ENCODE measurements at regions of chr3 and their contacts with region 1.

Region 1: GRCh38 chr3:122415720-122416654 is at the start of gene WDR5B:
- DNase-seq: peak; percentile 98
- H3K4me3 Mint-ChIP-seq: peak within 1 kb of the TSS; percentile 99
- H3K27ac Mint-ChIP-seq: peak within 1 kb of the TSS; percentile 99
- H3K4me1 Mint-ChIP-seq: peaks cover 32% of the 10 kb centered on the region
- H3K27me3 Mint-ChIP-seq: no peaks in the 10 kb centered on the region
- CTCF ChIP-seq: no peak
- total RNA-seq, gene WDR5B: 10.0 and 11.0 TPM in 2 replicates

Region 2: GRCh38 chr3:122314228-122314876 is 101.6 kb before region 1 on chr3:
- CTCF ChIA-PET with region 1: no interaction called
- POLR2A ChIA-PET with region 1: interaction called, 20 read pairs
- intact Hi-C with region 1: no loop called
- DNase-seq: peak; percentile 61
- H3K4me3 Mint-ChIP-seq: no peak overlapping the region
- H3K27ac Mint-ChIP-seq: peak overlapping the region; percentile 78
- H3K4me1 Mint-ChIP-seq: peaks cover 19% of the 10 kb centered on the region
- H3K27me3 Mint-ChIP-seq: no peaks in the 10 kb centered on the region
- CTCF ChIP-seq: no peak

Region 3: DNA sequence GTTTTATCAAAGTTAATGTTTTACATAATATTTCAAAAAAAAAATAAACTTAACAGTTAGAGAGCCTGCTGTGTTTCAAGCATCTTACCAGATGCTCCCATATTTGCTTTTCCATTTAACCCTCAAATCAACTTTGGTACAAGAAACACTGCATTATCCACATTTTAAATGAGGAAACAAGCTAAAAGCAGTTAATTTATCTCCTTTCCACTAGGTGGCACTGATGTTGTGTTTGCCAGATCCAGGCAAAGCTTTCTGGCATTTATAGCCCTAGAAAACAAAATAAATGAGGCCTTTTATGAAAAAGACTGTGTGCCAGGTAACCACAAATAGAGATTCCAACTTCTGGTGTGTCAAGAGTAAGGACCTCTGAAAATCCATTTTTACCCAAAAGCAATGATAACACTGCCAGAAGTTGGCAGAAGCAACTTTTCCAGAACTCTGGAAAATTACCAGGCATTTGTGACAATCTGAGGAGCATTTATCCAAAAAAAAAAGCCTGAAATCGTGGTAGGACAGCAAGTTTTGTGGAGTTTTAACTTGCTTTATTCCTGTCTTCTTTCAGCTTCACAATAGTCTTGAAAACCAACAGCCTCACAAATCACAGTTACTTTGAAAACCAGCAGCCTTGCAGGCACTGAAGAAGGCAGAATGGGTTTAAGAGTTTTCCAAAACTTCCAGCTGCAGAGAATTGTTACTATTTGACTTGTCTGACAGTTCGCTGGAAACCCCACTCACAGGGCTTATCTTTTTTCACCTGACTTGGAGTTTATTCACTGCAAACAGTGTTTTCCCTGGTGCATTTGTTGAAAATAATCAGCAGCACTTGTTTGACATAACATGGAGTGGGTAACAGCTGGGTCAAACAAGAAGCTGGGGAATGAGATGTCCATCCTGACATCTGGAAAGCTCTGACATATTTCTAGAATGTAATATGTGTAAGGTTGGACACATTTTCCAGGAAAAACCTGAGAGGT is 22.8 kb before region 1 on chr3:
- CTCF ChIA-PET with region 1: interaction called, 20 read pairs
- POLR2A ChIA-PET with region 1: interaction called, 68 read pairs
- intact Hi-C with region 1: no loop called
- DNase-seq: peak; percentile 56
- H3K4me3 Mint-ChIP-seq: no peak overlapping the region
- H3K27ac Mint-ChIP-seq: peak overlapping the region; percentile 89
- H3K4me1 Mint-ChIP-seq: peaks cover 25% of the 10 kb centered on the region
- H3K27me3 Mint-ChIP-seq: no peaks in the 10 kb centered on the region
- CTCF ChIP-seq: peak; percentile 67

Region 4: DNA sequence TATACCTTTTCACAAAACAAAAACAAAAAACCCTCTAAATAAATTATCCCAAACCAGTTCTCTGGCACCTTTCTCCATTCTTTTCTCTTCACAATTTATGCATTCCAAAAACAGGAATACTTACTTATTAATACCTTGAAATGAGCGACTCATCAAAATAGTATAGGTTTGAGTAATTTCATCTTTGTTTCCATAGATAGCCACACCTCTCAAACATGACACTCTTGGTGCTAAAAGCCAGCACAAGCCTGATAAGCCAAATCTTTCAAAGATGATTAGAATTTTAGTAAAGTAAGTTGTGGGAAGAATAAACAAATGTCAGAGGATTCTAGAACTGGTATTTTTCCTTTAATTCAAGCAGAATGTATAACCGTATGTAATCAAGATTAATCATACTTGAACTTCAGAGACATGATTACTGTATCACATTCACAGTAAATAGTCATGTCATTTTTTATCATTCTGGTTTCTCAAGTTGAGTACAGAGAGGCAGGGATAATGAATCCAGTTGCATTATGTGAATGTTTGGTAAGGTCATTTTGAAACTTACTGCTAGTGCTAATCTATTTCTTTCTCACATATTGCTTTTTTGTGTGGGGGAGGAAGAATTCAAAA is 12.0 kb after region 1 on chr3:
- CTCF ChIA-PET with region 1: interaction called, 8 read pairs
- POLR2A ChIA-PET with region 1: interaction called, 30 read pairs
- intact Hi-C with region 1: no loop called
- DNase-seq: no peak
- H3K4me3 Mint-ChIP-seq: no peak overlapping the region
- H3K27ac Mint-ChIP-seq: peak overlapping the region; percentile 19
- H3K4me1 Mint-ChIP-seq: peaks cover 8% of the 10 kb centered on the region
- H3K27me3 Mint-ChIP-seq: no peaks in the 10 kb centered on the region
- CTCF ChIP-seq: no peak

Region 5: DNA sequence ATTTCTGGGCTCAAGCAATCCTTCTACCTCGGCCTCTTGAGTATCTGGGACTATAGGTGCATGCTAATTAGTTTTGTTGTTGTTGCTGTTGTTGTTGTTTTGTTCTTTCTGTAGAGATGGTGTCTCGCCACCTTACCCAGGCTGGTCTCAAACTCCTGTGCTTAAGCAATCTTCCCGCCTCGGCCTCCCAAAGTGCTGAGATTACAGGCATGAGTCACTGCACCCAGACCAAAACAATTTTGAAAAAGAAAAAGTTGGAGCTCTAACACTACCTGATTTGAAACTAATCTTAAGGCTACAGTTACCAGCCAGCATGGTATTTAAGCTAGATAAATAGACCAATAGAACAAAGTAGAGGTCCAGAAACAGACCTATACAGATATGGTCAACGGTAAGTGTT is 69.0 kb after region 1 on chr3:
- CTCF ChIA-PET with region 1: no interaction called
- POLR2A ChIA-PET with region 1: interaction called, 20 read pairs
- intact Hi-C with region 1: no loop called
- DNase-seq: peak; percentile 74
- H3K4me3 Mint-ChIP-seq: peak overlapping the region; percentile 47
- H3K27ac Mint-ChIP-seq: peak overlapping the region; percentile 86
- H3K4me1 Mint-ChIP-seq: peaks cover 31% of the 10 kb centered on the region
- H3K27me3 Mint-ChIP-seq: no peaks in the 10 kb centered on the region
- CTCF ChIP-seq: no peak

Region 6: DNA sequence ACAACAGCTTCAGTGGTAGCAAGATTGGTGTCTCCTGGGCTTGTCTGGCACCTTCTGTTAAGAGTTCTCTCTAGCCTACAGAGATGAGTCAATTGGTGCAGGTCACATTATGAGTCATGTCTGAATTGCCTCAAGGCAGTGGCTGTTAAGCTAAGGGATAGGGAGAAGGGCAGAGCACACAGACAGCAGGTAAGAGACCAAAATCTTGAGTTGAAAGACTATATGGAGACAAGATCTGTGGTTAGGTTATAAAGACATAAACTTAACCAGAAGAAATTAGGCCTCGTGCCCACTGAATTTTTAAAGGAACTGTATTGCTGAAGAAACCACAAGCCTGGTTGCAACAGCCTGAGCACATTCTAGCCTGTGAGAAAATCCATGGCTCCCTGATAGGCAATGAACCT is 117.9 kb after region 1 on chr3:
- CTCF ChIA-PET with region 1: interaction called, 3 read pairs
- POLR2A ChIA-PET with region 1: interaction called, 12 read pairs
- intact Hi-C with region 1: no loop called
- DNase-seq: peak; percentile 98
- H3K4me3 Mint-ChIP-seq: no peak overlapping the region
- H3K27ac Mint-ChIP-seq: peak overlapping the region; percentile 21
- H3K4me1 Mint-ChIP-seq: peaks cover 28% of the 10 kb centered on the region
- H3K27me3 Mint-ChIP-seq: no peaks in the 10 kb centered on the region
- CTCF ChIP-seq: no peak

Region 7: GRCh38 chr3:122679085-122679881 is 263.3 kb after region 1 on chr3:
- CTCF ChIA-PET with region 1: interaction called, 4 read pairs
- POLR2A ChIA-PET with region 1: interaction called, 23 read pairs
- intact Hi-C with region 1: no loop called
- DNase-seq: peak; percentile 86
- H3K4me3 Mint-ChIP-seq: peak overlapping the region; percentile 77
- H3K27ac Mint-ChIP-seq: peak overlapping the region; percentile 83
- H3K4me1 Mint-ChIP-seq: peaks cover 16% of the 10 kb centered on the region
- H3K27me3 Mint-ChIP-seq: no peaks in the 10 kb centered on the region
- CTCF ChIP-seq: peak; percentile 77

Measured in MCF 10A (cell line).